Activated CD4-positive, alpha-beta memory T cell treated with anti-CD3 and anti-CD28 coated beads for 36 hours (primary cell): ENCODE measurements at regions of chr1 and their contacts with region 1.

Region 1: DNA sequence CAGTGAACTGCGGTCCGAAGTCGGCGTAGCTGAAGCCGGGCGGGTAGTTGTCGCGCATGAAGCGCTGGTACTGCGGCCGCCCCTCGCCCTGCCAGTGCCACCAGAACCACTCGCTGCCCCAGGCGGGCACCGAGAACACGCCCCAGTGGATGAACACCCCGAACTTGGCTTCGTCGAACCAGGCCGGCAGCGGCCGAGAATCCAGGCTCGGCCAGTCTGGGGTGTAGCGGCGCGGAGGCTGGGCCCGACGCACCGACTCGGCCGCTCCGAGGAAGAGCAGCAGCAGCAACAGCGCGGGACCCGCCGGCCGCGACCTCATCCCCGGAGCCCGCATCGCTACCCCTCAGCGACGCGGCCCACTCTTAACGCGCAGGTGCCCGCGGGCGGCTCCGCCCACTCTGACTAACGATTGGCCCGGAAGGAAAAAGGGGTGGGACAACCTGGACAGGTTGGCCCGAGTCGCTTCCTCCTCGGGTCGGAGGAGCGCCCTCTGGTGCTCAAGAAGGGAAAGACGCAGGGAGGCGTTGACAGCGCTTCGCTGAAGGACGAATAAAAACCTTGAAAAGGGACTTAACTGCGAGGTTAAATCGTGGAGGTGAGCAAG is at the start of gene FUCA1:
- DNase-seq: peak; percentile 95
- H3K4me3 Mint-ChIP-seq: peak within 1 kb of the TSS; percentile 77
- H3K27ac Mint-ChIP-seq: no peak within 1 kb of the TSS
- H3K4me1 Mint-ChIP-seq: peaks cover 19% of the 10 kb centered on the region
- H3K27me3 Mint-ChIP-seq: peaks cover 1% of the 10 kb centered on the region
- total RNA-seq, gene FUCA1: 5.3 to 5.4 TPM

Region 2: GRCh38 chr1:23916209-23917131 is 48.4 kb after region 1 on chr1:
- CTCF ChIA-PET with region 1: interaction called, 3 read pairs
- POLR2A ChIA-PET with region 1: no interaction called
- intact Hi-C with region 1: loop called (anchors 5 kb)
- DNase-seq: peak; percentile 69
- H3K4me3 Mint-ChIP-seq: no peak overlapping the region
- H3K27ac Mint-ChIP-seq: no peak overlapping the region
- H3K4me1 Mint-ChIP-seq: peaks cover 11% of the 10 kb centered on the region
- H3K27me3 Mint-ChIP-seq: no peaks in the 10 kb centered on the region